ENCODE measurements at regions of chr3 and their contacts with region 1.

Region 1: DNA sequence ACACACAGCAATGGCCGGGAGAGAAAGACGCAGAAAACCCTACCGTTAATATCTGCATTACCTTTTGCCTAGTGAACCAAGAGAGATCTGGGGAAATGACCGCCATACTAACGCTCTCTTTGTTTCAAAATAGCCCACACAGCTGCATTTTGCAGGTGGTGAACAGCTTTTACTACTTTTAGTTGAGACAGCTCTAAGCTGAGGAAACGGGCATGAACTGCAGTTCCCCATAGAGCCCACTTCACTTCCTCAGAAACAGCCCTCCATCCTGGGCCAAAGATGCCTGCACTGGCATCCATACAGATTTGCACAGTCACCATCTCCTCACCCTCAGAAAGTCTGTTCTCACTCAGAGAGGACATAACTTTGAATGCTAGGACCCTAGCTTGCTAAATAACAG is 45.0 kb downstream of the ZNF860 start:
- DNase-seq: no peak
- ATAC-seq: no peak
- H3K4me3 ChIP-seq: no peak overlapping the region
- H3K27ac ChIP-seq: no peak overlapping the region
- H3K4me1 ChIP-seq: no peaks in the 10 kb centered on the region
- H3K27me3 ChIP-seq: peaks cover 0 to 8% of the 10 kb centered on the region in 2 donors
- CTCF ChIP-seq: no peak
- POLR2A ChIP-seq: no peak

Region 2: GRCh38 chr3:32138545-32139104 is 112.0 kb after region 1 on chr3:
- intact Hi-C with region 1: loop called in 1 of 2 experiments (anchors 10 kb)
- DNase-seq: no peak
- ATAC-seq: no peak
- H3K4me3 ChIP-seq: no peak overlapping the region
- H3K27ac ChIP-seq: no peak overlapping the region
- H3K4me1 ChIP-seq: no peaks in the 10 kb centered on the region
- H3K27me3 ChIP-seq: no peaks in the 10 kb centered on the region
- CTCF ChIP-seq: no peak
- POLR2A ChIP-seq: no peak

Region 3: DNA sequence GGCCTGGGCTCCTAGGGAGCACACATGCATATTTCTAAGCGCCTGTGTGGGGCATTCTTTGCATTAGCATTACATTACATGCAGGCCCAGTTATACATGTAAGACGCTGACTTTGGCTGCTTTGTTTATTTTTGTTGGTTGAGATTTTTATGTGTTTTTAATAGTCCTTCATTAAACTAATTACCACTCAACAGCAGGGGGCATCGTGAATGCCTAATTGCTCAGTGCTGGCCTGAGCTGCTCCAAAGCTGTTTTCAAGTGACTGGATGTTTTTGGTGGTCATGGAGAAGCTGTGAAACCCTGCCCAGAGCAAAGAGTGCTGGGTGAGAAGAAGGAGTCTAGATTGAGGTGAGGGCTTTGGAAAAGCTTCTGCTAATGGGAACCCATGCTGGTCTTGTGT is 121.3 kb after region 1 on chr3:
- intact Hi-C with region 1: loop called in 1 of 2 experiments (anchors 5 kb)
- DNase-seq: no peak
- ATAC-seq: no peak
- H3K4me3 ChIP-seq: no peak overlapping the region
- H3K27ac ChIP-seq: no peak overlapping the region
- H3K4me1 ChIP-seq: no peaks in the 10 kb centered on the region
- H3K27me3 ChIP-seq: no peaks in the 10 kb centered on the region
- CTCF ChIP-seq: no peak
- POLR2A ChIP-seq: no peak